H1 (cell line): ENCODE measurements at regions of chr7 and their contacts with region 1.

Region 1: GRCh38 chr7:93622036-93623033 is 47.8 kb upstream of the CALCR start:
- DNase-seq: no peak
- H3K4me3 ChIP-seq: peak overlapping the region in 1 of 4 experiments; percentile 3; a peak in 1 of 8 replicates
- H3K27ac ChIP-seq: no peak overlapping the region
- H3K4me1 ChIP-seq: peaks cover 0 to 5% (median 2%) of the 10 kb centered on the region in 4 experiments; a peak in 3 of 7 replicates
- H3K27me3 ChIP-seq: no peaks in the 10 kb centered on the region
- CTCF ChIP-seq: peak in 2 of 3 experiments; percentile 65 to 70; a peak in 3 of 4 replicates
- EP300 ChIP-seq: no peak
- POLR2A ChIP-seq: no peak
- RAD21 ChIP-seq: peak; percentile 77 to 87

Region 2: GRCh38 chr7:93036807-93037206 is 585.5 kb before region 1 on chr7:
- CTCF ChIA-PET with region 1: no interaction called
- POLR2A ChIA-PET with region 1: no interaction called
- DNase-seq: no peak
- H3K4me3 ChIP-seq: no peak overlapping the region
- H3K27ac ChIP-seq: no peak overlapping the region
- H3K4me1 ChIP-seq: peaks cover 0 to 12% (median 8%) of the 10 kb centered on the region in 4 experiments; a peak in 6 of 7 replicates
- H3K27me3 ChIP-seq: no peaks in the 10 kb centered on the region; a peak in 2 of 7 replicates
- CTCF ChIP-seq: no peak
- EP300 ChIP-seq: no peak
- POLR2A ChIP-seq: no peak
- RAD21 ChIP-seq: no peak

Region 3: DNA sequence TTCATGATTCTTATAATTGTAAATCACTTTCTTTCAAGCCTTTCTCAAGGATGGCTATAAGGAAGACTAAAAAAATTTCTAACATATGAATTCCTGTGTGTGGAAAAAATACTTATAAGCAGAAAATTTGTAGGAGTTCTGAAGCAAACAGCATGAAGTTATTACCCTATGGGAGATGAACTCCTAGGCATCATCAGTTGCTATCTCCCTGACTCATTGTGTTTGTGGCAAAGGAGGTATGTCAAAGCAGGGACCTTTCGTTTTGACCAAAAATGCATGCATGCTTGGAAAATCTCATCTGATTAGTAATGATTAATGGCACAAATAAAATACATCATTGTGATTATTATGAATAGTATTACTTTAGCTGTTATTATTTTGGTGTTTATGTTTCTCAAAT is 107.2 kb before region 1 on chr7:
- CTCF ChIA-PET with region 1: no interaction called
- POLR2A ChIA-PET with region 1: no interaction called
- DNase-seq: no peak
- H3K4me3 ChIP-seq: no peak overlapping the region
- H3K27ac ChIP-seq: no peak overlapping the region
- H3K4me1 ChIP-seq: no peaks in the 10 kb centered on the region
- H3K27me3 ChIP-seq: no peaks in the 10 kb centered on the region
- CTCF ChIP-seq: no peak
- EP300 ChIP-seq: no peak
- POLR2A ChIP-seq: no peak
- RAD21 ChIP-seq: no peak

Region 4: DNA sequence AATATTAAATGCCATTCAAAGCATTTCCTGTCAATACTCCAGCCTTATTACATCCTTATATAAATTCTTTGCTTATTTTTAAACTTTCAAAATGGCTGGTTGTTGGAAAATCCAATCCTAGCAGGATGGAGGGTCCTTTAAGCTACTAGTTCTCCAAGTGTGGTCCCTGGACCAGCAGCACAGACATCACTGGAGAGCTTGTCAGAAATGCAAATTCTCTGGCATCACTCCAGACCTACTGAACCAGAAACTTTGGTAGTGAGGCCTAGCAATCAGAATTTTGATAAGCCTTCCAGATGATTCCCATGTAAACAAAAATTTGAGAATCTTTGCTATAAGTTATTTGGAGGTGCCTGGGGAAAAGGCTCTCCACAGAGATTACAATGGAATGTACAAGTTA is 91.6 kb before region 1 on chr7:
- CTCF ChIA-PET with region 1: no interaction called
- POLR2A ChIA-PET with region 1: no interaction called
- DNase-seq: no peak
- H3K4me3 ChIP-seq: no peak overlapping the region
- H3K27ac ChIP-seq: no peak overlapping the region
- H3K4me1 ChIP-seq: no peaks in the 10 kb centered on the region
- H3K27me3 ChIP-seq: no peaks in the 10 kb centered on the region
- CTCF ChIP-seq: no peak
- EP300 ChIP-seq: no peak
- POLR2A ChIP-seq: no peak
- RAD21 ChIP-seq: no peak

Region 5: DNA sequence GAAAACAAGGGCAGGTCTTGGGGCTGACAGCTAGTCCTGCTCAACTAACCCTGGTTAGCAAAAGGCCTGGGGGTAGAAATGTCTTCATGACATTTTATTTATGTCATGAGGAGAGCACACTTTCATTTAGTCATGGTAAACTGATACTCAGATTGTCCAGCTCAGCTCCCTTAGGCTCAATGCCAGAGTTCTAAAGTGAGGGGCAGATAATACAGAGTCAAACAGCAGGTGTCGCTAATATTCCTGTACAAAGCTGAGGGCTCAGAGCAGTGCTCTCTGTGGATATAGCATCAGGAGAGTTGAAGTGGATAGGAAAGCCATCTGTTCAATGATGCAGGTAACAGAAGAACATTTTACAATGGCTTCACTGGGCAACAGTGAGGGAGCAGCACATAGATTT is 21.0 kb before region 1 on chr7:
- CTCF ChIA-PET with region 1: interaction called, 15 read pairs
- POLR2A ChIA-PET with region 1: no interaction called
- DNase-seq: no peak
- H3K4me3 ChIP-seq: no peak overlapping the region
- H3K27ac ChIP-seq: no peak overlapping the region
- H3K4me1 ChIP-seq: no peaks in the 10 kb centered on the region
- H3K27me3 ChIP-seq: no peaks in the 10 kb centered on the region
- CTCF ChIP-seq: peak in 1 of 3 experiments; percentile 21; a peak in 1 of 4 replicates
- EP300 ChIP-seq: no peak
- POLR2A ChIP-seq: no peak
- RAD21 ChIP-seq: peak; percentile 39 to 54

Region 6: GRCh38 chr7:93632371-93632770 is 10.0 kb after region 1 on chr7:
- CTCF ChIA-PET with region 1: interaction called, 28 read pairs
- POLR2A ChIA-PET with region 1: no interaction called
- DNase-seq: no peak
- H3K4me3 ChIP-seq: no peak overlapping the region
- H3K27ac ChIP-seq: no peak overlapping the region
- H3K4me1 ChIP-seq: no peaks in the 10 kb centered on the region; a peak in 2 of 7 replicates
- H3K27me3 ChIP-seq: no peaks in the 10 kb centered on the region
- CTCF ChIP-seq: no peak
- EP300 ChIP-seq: no peak
- POLR2A ChIP-seq: no peak
- RAD21 ChIP-seq: no peak

Region 7: DNA sequence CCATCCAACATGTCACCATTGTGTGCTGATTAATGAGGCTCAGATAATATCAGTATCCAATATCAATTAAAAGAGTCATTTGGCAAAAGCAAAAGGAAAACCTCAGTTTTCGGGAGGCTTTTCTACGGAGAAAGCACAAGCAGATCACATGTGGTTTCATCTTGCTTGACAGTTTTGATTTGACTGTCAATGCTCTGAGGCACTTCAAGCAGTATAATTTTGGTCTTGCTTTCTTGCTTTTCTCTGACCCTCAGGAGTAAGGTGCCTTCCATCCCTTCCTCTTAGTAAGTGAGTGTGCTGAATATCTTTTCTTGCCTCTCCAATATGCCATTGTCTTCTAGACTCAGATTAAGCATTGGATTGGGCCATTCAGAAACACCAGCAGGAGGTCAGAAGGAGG is 67.7 kb after region 1 on chr7:
- CTCF ChIA-PET with region 1: interaction called, 39 read pairs
- POLR2A ChIA-PET with region 1: no interaction called
- DNase-seq: no peak
- H3K4me3 ChIP-seq: no peak overlapping the region
- H3K27ac ChIP-seq: no peak overlapping the region
- H3K4me1 ChIP-seq: no peaks in the 10 kb centered on the region
- H3K27me3 ChIP-seq: no peaks in the 10 kb centered on the region
- CTCF ChIP-seq: no peak
- EP300 ChIP-seq: no peak
- POLR2A ChIP-seq: no peak
- RAD21 ChIP-seq: no peak

Region 8: GRCh38 chr7:93715234-93715633 is 92.9 kb after region 1 on chr7:
- CTCF ChIA-PET with region 1: interaction called, 15 read pairs
- POLR2A ChIA-PET with region 1: interaction called, 3 read pairs
- DNase-seq: peak; percentile 33 to 74
- H3K4me3 ChIP-seq: no peak overlapping the region
- H3K27ac ChIP-seq: no peak overlapping the region
- H3K4me1 ChIP-seq: no peaks in the 10 kb centered on the region
- H3K27me3 ChIP-seq: peaks cover 0 to 1% (median 0%) of the 10 kb centered on the region in 4 experiments; a peak in 1 of 7 replicates
- CTCF ChIP-seq: peak; percentile 64 to 71 (median 65)
- EP300 ChIP-seq: no peak
- POLR2A ChIP-seq: no peak
- RAD21 ChIP-seq: peak; percentile 78 to 86

Region 9: DNA sequence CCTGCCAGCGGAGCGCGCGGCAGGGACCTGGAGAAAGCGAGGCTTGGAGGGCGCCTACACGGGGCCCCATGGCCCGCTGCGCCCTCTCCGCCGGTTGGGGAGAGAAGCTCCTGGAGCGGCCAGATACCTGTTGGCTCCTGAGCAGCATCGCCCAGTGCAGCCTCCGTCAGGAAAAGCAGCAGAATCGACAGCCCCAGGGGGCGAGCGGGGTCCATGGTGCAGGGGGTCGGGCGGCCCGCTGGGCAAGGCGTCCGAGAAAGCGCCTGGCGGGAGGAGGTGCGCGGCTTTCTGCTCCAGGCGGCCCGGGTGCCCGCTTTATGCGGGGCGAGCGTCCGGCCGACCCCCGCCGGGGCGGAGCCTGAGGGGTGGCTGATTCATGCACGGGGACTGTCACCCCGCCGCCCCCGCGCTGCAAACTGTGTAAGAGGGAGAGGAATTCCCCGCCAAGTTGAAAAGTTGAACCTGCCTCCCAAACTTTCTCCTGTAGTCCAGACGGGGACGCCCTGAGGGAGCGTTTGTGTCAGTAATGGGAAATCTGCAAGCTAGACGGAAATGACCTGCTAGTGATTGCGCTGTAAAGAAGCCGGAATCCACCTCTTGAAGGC is 268.2 kb after region 1 on chr7 and contains the start of gene TFPI2:
- CTCF ChIA-PET with region 1: interaction called, 15 read pairs
- POLR2A ChIA-PET with region 1: no interaction called
- DNase-seq: peak; percentile 43 to 74
- H3K4me3 ChIP-seq: peak within 1 kb of the TSS; percentile 66 to 84 (median 74)
- H3K27ac ChIP-seq: no peak within 1 kb of the TSS
- H3K4me1 ChIP-seq: no peaks in the 10 kb centered on the region
- H3K27me3 ChIP-seq: peaks cover 0 to 25% (median 6%) of the 10 kb centered on the region in 4 experiments; a peak in 5 of 7 replicates
- CTCF ChIP-seq: no peak
- EP300 ChIP-seq: no peak
- POLR2A ChIP-seq: no peak
- RAD21 ChIP-seq: peak; percentile 13 to 15; a peak in 2 of 4 replicates
- total RNA-seq, gene TFPI2: 8.9 and 10.9 TPM in 2 replicates

Region 10: DNA sequence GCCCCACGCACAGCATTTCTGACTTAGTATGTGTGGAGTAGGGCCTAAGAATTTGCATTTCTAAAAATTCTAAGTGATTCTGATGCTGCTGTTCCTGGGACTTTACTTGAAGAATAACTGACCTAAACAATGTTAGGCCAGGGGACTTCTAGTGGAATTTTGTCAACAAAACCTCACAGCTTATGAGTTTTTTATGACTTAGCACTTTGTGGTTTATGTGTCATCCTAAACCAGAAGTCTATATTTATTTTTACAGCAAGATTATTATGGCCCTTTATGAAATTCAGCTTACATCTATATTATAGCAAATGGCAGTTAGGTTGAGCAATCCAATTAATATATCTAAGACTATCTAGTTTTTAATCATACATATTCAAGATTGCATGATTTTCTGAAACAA is 406.4 kb after region 1 on chr7:
- CTCF ChIA-PET with region 1: no interaction called
- POLR2A ChIA-PET with region 1: no interaction called
- DNase-seq: no peak
- H3K4me3 ChIP-seq: no peak overlapping the region
- H3K27ac ChIP-seq: no peak overlapping the region
- H3K4me1 ChIP-seq: no peaks in the 10 kb centered on the region
- H3K27me3 ChIP-seq: no peaks in the 10 kb centered on the region
- CTCF ChIP-seq: no peak
- EP300 ChIP-seq: no peak
- POLR2A ChIP-seq: no peak
- RAD21 ChIP-seq: no peak